AG04449 (cell line): ENCODE measurements at regions of chr3 and their contacts with region 1.

Region 1: GRCh38 chr3:150528354-150528797 is 17.9 kb downstream of the SERP1 start:
- DNase-seq: no peak
- H3K4me3 ChIP-seq: no peak overlapping the region
- CTCF ChIP-seq: peak; percentile 10

Region 2: GRCh38 chr3:149990423-149990948 is 537.9 kb before region 1 on chr3:
- CTCF ChIA-PET with region 1: no interaction called
- POLR2A ChIA-PET with region 1: no interaction called
- DNase-seq: peak; percentile 49
- H3K4me3 ChIP-seq: no peak overlapping the region
- CTCF ChIP-seq: no peak

Region 3: DNA sequence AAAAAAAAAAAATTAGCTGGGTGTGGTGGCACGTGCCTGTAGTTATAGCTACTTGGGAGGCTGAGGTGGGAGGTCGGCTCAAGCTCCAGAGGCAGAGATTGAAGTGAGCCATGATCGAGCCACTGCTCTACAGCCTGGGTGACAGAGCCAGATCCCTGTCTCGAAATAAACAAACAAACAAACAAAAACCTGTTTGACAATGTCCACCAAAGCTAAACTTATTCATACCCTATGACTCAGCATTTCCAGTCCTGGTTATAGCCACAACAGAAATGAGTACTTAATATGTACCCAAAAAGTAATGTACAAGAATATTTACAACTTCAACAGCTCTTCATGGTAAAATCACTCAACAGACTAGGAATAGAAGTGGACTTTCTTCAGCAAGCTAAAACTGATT is 13.2 kb before region 1 on chr3:
- CTCF ChIA-PET with region 1: interaction called, 15 read pairs
- POLR2A ChIA-PET with region 1: no interaction called
- DNase-seq: no peak
- H3K4me3 ChIP-seq: no peak overlapping the region
- CTCF ChIP-seq: no peak

Region 4: GRCh38 chr3:150538324-150539208 is 10.2 kb after region 1 on chr3:
- CTCF ChIA-PET with region 1: interaction called, 10 read pairs
- POLR2A ChIA-PET with region 1: no interaction called
- DNase-seq: no peak
- H3K4me3 ChIP-seq: no peak overlapping the region
- CTCF ChIP-seq: no peak

Region 5: DNA sequence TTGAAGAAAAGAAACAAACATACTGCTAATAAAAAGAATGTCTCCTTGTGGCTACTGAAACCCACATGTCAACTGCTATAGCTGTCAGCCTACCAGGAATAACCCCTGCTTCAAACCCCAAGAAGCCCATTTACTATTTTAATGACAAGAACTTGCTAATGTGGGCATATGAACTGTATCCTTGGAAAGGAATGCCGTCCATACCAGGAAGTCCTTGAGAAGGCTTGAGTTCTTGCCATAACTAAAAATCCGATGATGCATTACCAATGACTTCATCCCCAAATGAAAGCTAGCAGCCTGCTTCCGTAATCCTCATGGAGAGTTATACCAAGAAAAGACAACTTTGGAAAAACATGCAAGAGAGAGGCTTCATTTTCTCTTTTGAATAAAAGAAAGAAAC is 342.0 kb after region 1 on chr3:
- CTCF ChIA-PET with region 1: interaction called, 16 read pairs
- POLR2A ChIA-PET with region 1: no interaction called
- DNase-seq: peak; percentile 55
- H3K4me3 ChIP-seq: no peak overlapping the region
- CTCF ChIP-seq: no peak